Left colon (tissue), 2 donors: ENCODE measurements at regions of chr19 and their contacts with region 1.

Region 1: DNA sequence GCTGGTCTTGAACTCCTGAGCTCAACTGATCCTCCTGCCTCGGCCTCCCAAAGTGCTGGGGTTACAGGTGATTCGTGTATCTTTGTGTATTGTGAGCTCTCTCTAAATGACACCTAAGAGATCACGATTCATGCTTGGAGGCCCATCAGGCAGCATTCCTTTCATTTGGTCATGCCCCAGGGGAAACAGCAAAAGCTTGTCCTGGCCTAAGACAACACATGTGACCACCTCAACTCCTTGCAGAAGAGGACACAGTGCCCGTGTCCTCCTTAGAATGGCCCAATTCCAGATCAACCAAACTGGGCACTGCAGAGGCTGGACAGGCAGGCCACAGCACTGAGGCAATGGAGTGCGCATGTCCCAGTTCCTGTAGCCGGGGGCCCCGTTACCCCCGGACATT is 32.5 kb downstream of the ZC3H4 start:
- DNase-seq: no peak
- ATAC-seq: no peak

Region 2: GRCh38 chr19:47112997-47113849 is 32.1 kb after region 1 on chr19 and contains the start of gene ZC3H4:
- intact Hi-C with region 1: loop called in 1 of 2 experiments (anchors 5 kb)
- DNase-seq: peak; percentile 97 to 99
- ATAC-seq: peak; percentile 84
- total RNA-seq, gene ZC3H4: 45.8 to 47.0 TPM

Region 3: DNA sequence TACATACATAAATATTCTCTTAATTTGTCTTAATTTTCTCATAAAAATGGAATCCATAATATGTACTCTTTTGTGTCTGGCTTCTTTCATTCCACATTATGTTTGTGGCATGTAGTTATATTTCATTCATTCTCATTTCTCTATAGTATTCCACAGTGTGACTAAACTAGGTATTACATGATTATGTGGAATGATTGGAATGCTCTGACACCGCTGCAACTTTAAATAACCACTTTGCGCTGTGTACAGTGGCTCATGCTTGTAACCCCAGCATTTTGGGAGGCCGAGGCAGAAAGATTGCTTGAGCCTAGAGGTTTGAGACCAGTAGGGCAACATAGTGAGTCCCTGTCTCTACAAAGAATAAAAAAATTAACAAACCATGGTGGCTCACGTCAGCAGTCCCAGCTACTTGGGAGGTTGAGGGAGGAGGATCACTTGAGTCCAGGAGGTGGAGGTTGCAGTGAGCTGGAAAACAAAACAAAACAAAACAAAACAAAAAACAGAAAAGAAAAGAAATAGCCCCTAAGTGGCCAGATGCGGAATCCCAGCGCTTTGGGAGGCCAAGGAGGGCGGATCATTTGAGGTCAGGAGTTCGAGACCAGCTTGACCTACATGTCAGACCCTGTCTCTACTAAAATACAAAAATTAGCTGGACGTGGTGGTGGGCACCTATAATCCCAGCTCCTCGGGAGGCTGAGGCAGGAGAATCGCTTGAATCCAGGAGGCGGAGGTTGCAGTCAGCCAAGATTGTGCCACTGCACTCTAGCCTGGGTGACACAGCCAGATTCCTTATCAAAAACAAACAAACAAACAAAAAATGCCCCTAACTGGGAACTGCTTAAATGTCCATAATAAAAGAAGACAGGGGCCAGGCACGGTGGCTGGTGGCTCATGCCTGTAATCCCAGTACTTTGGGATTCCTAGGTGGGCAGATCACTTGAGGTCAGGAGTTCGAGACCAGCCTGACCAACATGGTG is 41.5 kb after region 1 on chr19:
- intact Hi-C with region 1: loop called (anchors 2 to 5 kb)
- DNase-seq: no peak
- ATAC-seq: no peak

Region 4: DNA sequence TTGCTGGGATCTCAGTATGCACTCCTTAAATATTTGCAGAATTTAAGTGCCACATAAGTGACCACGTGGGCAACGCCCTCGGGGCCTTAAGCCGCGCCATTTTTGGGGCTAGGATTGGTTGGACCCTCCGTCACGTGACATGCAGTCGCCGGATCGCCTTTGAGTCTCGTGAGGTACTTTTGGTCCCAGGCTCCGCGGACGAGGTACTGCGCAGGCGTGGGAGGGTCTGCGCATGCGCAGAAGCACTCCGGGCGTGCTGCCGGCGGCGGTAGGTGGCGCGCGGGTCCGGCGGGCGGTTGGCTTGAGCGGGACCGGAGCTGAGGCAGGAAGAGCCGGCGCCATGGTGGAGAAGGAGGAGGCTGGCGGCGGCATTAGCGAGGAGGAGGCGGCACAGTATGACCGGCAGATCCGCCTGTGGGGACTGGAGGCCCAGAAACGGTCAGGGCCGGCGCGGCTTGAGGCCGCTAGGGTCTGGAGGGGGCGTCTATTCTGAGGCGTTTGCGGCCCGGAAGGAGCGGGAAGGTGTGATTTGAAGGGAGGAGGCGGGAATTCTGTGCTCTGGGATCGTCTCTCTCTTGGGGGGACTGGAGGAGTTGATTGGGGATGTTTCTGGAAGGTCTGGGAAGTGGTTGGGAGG is 49.6 kb after region 1 on chr19 and contains the start of gene SAE1:
- intact Hi-C with region 1: loop called in 1 of 2 experiments (anchors 5 kb)
- DNase-seq: peak; percentile 91 to 94
- ATAC-seq: peak; percentile 93
- total RNA-seq, gene SAE1: 58.4 to 60.7 TPM